Astrocyte of the cerebellum (primary cell): ENCODE measurements at regions of chr9 and their contacts with region 1.

Region 1: DNA sequence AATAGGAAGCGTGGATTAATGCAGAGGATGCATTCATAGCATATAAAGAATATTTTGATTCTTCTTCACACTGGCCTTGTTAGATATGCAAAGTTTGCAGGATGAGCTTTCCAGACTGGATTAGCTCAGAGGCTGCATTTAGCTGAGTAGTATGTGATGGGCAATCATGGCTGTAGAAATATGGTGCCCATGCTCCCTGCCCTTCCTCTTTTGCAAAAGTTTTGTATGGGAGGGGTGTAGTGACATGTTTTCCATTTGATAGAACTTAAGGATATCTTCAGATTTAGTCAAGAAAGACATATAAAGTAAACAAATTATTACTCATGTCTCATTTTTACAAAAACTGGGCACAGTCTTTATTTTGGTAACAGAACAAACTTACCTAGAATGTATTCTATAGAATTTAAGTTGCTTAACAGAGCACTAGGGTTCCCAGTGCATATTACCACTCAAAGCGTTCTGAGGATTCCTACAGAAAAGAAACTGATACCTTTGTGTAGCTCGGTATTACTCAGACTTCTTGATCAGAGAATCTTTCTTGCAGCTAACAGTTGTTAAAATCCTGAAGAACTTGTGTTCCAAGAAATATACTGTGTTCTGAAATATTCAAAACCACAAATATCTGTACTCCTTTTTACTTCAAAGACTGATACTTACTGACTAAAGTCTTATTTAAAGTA is 9.8 kb downstream of the GTF3C4 start:
- DNase-seq: no peak
- H3K4me3 ChIP-seq: no peak overlapping the region
- CTCF ChIP-seq: no peak

Region 2: GRCh38 chr9:132768932-132769905 is 89.1 kb after region 1 on chr9:
- in situ Hi-C with region 1: loop called (anchors 5 kb)
- DNase-seq: no peak
- H3K4me3 ChIP-seq: peak overlapping the region; percentile 69
- CTCF ChIP-seq: peak; percentile 46